OCI-LY7 (cell line): ENCODE measurements at regions of chr11 and their contacts with region 1.

Region 1: DNA sequence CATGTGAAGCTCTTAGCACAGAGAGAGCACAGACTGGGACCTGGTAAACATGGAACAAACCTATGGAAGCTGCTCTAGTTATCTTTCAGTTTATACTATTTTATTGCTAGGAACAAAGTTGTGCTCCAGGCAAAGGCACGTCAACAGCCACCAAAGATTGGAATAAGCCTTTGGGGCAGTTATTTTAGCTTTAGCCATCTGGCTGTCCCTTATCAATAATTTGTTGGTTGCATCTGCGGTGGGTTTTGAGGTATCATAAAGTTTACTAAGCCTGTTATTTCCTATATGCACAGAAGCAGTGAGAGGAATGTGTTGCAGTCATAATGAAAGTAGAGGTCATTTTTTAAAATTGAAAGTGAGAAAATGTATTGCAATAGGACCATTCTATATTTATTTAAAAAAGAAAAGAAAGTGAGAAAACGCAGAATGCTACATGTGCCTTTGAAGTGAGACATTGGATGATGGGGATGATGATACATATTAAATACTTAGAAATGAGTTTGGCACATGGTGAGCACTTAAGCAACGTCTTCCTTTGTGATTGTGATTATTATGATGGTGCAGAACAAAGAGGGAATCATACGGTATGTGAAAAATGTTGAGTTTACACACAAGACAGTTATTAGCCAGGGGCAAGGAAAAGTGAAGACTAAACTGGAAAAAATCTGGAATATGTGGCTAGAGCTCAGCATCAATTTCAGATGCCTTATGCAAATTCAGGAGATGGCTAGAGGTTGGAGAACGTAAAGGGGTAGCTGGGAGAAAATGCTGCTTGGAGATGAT is 58.3 kb downstream of the PRR5L start:
- DNase-seq: no peak
- H3K4me3 ChIP-seq: no peak overlapping the region
- H3K27ac ChIP-seq: no peak overlapping the region
- H3K4me1 ChIP-seq: peaks cover 57% of the 10 kb centered on the region
- CTCF ChIP-seq: no peak

Region 2: DNA sequence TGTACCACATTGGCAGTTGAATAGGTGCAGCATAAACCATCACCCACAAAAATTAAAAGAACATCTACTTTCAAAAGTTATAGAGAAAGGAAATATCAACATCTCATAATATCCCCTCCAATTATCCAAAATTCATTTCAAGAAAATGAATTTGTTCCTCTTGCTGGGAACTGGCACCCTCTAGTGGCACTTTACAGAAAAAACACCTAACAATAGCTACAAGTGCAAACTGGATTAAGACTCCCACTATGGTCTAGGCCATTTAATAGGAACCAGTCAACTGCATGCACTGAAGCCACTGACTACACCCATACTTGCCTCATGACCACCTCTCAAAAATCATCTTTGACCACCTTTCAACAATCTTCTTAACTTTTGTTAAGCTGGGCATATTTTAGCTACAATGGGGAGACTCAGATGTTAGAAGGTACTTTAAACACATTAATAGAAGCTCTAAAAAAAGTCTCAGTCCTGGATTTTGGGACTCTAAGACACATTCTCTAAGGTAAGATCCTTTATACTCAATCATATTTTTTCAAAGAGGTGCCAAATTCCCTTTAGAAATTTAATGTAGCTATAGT is 138.4 kb after region 1 on chr11:
- CTCF ChIA-PET with region 1: no interaction called
- POLR2A ChIA-PET with region 1: no interaction called
- intact Hi-C with region 1: loop called (anchors 5 kb)
- DNase-seq: peak; percentile 69
- H3K4me3 ChIP-seq: no peak overlapping the region
- H3K27ac ChIP-seq: no peak overlapping the region
- H3K4me1 ChIP-seq: peaks cover 8% of the 10 kb centered on the region
- CTCF ChIP-seq: peak; percentile 98